ENCODE measurements at regions of chr10 and their contacts with region 1.

Region 1: DNA sequence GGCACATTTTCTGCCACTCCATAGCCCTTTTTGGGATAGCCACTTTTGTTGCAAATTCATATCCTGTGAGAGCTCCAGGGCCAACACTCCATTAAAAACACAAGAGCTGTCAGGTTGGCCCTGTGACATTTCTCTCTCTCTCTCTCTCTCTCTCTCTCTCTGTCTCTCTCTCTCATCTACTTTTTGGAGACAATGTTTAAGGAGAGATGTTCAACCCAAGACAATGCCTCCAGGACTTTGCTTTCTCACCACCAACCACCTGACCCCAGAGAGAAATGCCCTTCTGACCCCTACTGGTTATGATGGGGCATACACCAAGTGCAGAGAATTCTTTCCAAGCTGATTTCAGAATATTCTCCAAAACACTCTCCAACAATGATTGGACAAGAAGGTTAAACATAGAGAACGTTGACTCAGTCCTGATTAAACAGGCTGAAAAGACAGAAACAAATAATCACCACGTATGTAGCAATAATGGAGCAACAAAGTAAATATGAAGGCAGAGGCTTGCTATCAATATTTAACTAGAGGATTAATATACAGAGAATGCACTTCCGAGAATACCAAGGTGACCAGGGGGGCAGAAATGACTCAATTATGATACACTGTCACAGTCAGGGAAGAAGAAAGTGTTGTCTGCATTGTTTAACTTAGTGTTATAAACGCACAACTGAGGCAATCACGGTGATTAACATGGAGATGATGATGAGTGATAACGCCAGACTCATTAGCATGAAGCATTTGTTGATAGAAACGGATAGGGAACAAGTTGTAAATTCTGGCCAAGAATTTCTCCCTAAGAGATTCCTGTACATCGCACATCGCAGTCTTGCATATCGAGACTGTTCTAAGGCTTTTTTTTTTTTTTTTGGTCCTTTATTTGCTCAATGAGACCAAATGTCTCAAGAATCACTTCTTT is 178.5 kb downstream of the NRP1 start:
- DNase-seq: peak; percentile 36
- ATAC-seq: peak; percentile 83
- H3K4me3 Mint-ChIP-seq: no peak overlapping the region
- H3K27ac Mint-ChIP-seq: no peak overlapping the region
- H3K4me1 Mint-ChIP-seq: peaks cover 27% of the 10 kb centered on the region
- H3K27me3 Mint-ChIP-seq: peaks cover 4% of the 10 kb centered on the region
- CTCF ChIP-seq: peak; percentile 78

Region 2: DNA sequence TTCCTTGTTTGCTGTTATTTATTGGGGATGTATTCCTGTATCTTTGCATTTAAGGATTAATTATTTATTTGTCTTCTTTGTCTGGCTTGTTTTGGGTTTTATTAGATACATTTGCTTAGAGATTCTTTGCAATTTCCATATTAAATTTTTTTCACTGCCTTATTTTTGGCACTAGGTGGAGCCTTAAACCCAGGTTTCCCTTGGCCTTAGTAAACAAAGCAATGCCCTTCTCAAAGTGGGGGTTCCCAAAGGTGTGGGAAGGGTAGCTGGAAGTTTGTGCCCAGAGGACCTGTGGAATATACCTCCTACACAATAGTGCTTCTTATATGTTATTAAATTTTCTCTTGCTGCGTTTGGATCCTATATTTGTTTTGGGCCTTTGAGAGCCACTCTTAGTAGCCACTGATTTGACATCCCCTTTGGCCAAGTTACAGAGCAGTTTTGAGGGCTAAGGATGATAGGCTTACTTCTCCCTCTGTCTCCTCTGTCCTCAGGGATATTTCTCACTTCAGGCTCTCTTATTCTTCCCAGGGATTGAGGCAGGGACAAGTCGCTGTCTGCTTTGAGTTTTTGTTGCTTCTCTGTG is 360.3 kb before region 1 on chr10:
- CTCF ChIA-PET with region 1: no interaction called
- POLR2A ChIA-PET with region 1: no interaction called
- intact Hi-C with region 1: loop called (anchors 10 kb)
- DNase-seq: peak; percentile 3
- ATAC-seq: no peak
- H3K4me3 Mint-ChIP-seq: no peak overlapping the region
- H3K27ac Mint-ChIP-seq: no peak overlapping the region
- H3K4me1 Mint-ChIP-seq: no peaks in the 10 kb centered on the region
- H3K27me3 Mint-ChIP-seq: no peaks in the 10 kb centered on the region
- CTCF ChIP-seq: peak; percentile 63

Region 3: GRCh38 chr10:33106767-33107166 is 49.2 kb before region 1 on chr10:
- CTCF ChIA-PET with region 1: interaction called, 11 read pairs
- POLR2A ChIA-PET with region 1: interaction called, 3 read pairs
- intact Hi-C with region 1: no loop called
- DNase-seq: no peak
- ATAC-seq: no peak
- H3K4me3 Mint-ChIP-seq: no peak overlapping the region
- H3K27ac Mint-ChIP-seq: no peak overlapping the region
- H3K4me1 Mint-ChIP-seq: peaks cover 25% of the 10 kb centered on the region
- H3K27me3 Mint-ChIP-seq: peaks cover 16% of the 10 kb centered on the region
- CTCF ChIP-seq: no peak

Region 4: DNA sequence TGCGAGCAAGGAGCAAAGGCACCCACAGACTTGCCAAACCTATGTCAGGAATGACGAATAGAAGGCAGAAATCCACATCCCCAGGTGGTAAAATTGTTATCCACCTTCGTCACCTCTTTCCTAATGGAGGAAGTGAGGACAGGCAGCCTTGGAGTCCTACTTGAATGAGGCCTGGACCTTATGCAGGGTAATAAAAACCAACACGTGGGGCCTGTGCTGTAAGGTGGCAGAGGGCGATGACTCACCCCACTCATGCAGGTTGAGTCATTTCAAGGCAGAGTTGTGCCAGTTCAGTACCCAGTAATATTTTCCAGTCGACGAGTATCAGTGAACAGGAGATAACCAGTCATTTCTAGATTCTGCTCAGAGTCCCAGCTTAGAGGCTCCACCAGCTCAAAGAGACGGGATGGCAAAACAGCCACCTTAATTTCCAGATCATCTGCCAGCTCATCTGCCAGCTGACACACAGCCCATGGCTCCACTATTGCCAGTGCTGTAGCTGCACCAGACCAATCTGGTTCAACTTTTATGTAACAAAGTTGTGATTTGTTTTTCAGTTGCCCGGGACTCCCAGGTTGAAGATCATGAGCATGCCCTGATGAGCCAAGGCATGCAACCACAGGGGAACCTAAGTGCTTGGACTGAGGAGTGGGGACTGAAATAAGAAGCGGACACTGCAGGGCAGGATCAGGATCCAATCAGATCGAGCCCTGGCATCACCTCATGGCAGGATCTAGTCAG is 21.8 kb before region 1 on chr10:
- CTCF ChIA-PET with region 1: interaction called, 9 read pairs
- POLR2A ChIA-PET with region 1: interaction called, 23 read pairs
- intact Hi-C with region 1: no loop called
- DNase-seq: peak; percentile 92
- ATAC-seq: peak; percentile 74
- H3K4me3 Mint-ChIP-seq: peak overlapping the region; percentile 10
- H3K27ac Mint-ChIP-seq: peak overlapping the region; percentile 92
- H3K4me1 Mint-ChIP-seq: peaks cover 69% of the 10 kb centered on the region
- H3K27me3 Mint-ChIP-seq: peaks cover 1% of the 10 kb centered on the region
- CTCF ChIP-seq: no peak

Region 5: DNA sequence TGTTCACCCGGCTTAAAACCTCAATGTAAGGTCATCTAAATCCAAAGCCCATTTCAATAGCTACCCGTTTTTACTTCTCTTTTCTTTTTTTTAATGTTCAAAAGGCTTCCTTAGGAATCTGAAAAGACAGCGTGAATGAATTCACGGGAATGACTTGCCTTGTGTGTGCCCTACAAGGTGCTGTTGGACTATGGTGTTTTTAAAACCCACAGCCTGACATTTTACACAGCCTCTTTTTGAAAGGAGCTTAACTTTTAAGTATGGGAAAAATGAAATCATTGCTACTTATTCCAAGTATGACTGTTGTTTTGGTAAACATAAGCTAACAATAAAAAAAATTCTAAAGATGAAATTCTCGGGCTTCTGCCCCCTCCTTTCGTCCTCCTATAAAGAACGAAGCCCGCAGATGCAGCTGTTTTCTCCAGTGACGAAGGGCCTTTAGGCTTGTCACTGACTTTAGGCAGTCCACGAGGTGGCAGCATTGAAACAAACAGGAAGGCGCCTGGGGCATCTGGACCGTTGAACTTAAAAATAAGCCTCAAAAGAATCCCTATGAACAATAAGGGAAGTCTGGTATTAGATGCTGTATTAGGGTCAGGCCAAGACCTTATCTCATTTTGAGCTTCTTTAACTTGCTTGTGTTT is 37.2 kb after region 1 on chr10:
- CTCF ChIA-PET with region 1: interaction called, 10 read pairs
- POLR2A ChIA-PET with region 1: no interaction called
- intact Hi-C with region 1: no loop called
- DNase-seq: peak; percentile 85
- ATAC-seq: peak; percentile 82
- H3K4me3 Mint-ChIP-seq: no peak overlapping the region
- H3K27ac Mint-ChIP-seq: no peak overlapping the region
- H3K4me1 Mint-ChIP-seq: no peaks in the 10 kb centered on the region
- H3K27me3 Mint-ChIP-seq: peaks cover 5% of the 10 kb centered on the region
- CTCF ChIP-seq: peak; percentile 82